ENCODE measurements at regions of chr9 and their contacts with region 1.

Region 1: DNA sequence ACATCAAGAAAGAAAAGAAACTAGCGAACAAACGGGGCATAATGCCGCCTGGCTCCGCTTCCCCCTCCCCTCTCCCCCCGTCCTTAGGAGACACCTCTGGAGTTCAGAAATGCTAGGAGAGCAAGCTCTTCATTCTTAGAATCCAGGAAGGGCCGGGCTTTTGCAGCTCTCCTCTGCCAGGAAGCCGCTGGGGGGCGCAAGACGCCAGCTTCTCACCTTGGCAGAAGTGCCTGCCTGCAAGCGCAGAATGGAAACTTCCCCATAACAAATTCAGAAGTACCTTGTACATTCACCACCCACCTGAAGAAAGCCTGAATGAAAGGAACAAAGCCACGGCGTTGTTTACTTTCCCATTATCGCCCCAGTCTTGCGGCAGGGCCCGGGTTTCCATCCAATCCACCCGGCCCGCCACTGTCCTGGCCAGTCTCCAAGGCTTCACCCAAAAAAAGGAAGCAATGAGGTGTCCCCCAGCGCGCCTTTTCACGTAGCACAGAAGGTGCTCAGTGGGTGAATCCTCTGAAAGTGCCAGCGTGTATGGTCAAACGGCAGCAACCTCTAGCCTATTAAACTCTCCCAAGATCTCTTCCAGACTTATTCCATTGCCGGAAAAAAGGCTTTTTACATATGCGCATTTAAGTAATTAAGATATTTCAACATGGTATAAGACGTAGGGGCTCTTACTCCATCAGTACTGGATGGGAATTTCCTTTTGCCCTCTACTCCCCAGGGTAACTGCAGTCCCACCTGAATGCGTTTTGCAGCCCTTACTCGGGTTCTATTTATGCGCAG is 1.6 kb upstream of the GADD45G start:
- DNase-seq: peak; percentile 88
- H3K4me3 ChIP-seq: peak overlapping the region in 6 of 7 experiments; percentile 43 to 73 (median 64)
- H3K27ac ChIP-seq: no peak overlapping the region
- H3K4me1 ChIP-seq: peaks cover 12 to 46% (median 41%) of the 10 kb centered on the region in 4 experiments
- H3K27me3 ChIP-seq: peaks cover 0 to 14% (median 0%) of the 10 kb centered on the region in 5 experiments

Region 2: GRCh38 chr9:89522261-89522958 is 80.8 kb before region 1 on chr9:
- CTCF ChIA-PET with region 1: no interaction called
- POLR2A ChIA-PET with region 1: no interaction called
- DNase-seq: peak; percentile 85 to 97 (median 94)
- H3K4me3 ChIP-seq: peak overlapping the region in 2 of 7 experiments; percentile 19 to 53
- H3K27ac ChIP-seq: peak overlapping the region in 1 of 2 experiments; percentile 59
- H3K4me1 ChIP-seq: peaks cover 31 to 91% (median 69%) of the 10 kb centered on the region in 4 experiments
- H3K27me3 ChIP-seq: no peaks in the 10 kb centered on the region

Region 3: GRCh38 chr9:89588006-89588879 is 14.9 kb before region 1 on chr9:
- CTCF ChIA-PET with region 1: interaction called, 40 read pairs
- POLR2A ChIA-PET with region 1: no interaction called
- DNase-seq: no peak
- H3K4me3 ChIP-seq: no peak overlapping the region
- H3K27ac ChIP-seq: no peak overlapping the region
- H3K4me1 ChIP-seq: no peaks in the 10 kb centered on the region
- H3K27me3 ChIP-seq: no peaks in the 10 kb centered on the region

Region 4: DNA sequence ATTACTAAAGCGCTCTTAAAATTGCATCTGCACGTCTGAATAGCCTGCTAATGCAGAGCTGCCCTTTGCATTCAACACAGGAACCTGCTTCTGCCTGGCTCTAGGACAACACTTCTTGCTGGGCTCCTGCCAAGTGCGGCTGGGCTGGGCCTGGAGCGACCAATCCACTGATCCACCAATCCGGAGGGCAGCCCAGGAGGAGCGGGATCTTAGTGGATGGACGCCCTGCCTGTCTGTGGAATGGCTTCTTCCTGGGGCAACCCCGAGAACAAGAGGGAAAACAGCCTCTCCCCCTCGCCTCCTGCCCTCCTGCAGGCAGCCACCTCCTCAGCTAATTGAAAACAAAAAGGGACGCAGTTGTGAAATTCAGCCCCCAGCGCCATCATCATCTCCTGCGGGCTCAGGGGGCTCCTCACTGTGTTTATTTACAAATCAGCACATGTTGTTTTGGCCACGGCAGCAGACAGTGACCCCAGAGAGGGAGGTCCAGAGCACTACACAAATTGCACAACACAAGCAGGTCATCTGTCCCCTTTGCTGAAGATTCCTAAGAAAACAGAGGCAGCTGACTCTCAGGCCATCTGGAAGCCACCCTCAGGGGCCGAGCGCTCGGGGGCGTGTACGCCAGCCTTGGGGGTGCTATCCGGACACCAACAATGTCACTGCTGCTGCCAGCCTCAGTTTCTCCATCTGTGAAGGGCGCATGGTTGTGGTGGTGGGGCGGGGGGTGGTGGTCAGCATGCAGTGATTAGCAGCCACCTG is 59.0 kb after region 1 on chr9:
- CTCF ChIA-PET with region 1: no interaction called
- POLR2A ChIA-PET with region 1: no interaction called
- DNase-seq: peak; percentile 89 to 94 (median 92)
- H3K4me3 ChIP-seq: peak overlapping the region in 4 of 7 experiments; percentile 3 to 59 (median 50)
- H3K27ac ChIP-seq: no peak overlapping the region
- H3K4me1 ChIP-seq: peaks cover 13 to 30% (median 19%) of the 10 kb centered on the region in 4 experiments
- H3K27me3 ChIP-seq: peaks cover 0 to 2% (median 0%) of the 10 kb centered on the region in 5 experiments

Region 5: DNA sequence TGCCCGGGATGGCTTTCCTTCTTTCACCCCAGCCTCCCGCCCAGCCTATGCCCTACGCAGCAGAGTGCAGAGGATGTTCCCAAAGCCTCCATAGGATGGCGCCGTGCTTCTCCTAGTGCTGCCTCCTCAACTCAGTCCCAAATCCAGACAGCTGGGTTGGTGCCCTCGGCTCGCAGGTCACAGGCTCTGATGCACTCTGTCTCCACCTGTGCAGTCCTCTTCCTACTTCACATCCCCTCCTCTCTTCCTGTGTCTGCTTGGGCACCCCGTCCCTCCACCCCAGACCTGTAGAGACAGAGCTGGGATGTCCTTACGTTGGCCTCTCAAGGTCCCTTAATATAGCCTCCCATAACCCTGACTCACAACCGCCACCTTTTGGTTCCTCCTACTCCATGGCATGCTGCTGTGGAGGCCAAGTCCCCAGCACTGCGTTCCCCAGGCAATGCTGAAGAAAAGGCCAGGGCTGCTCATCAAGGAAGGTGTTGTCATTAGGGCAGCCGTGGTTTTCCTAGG is 316.1 kb after region 1 on chr9:
- CTCF ChIA-PET with region 1: interaction called, 22 read pairs
- POLR2A ChIA-PET with region 1: no interaction called
- DNase-seq: peak; percentile 68 to 83 (median 80)
- H3K4me3 ChIP-seq: no peak overlapping the region
- H3K27ac ChIP-seq: no peak overlapping the region
- H3K4me1 ChIP-seq: peaks cover 0 to 5% (median 0%) of the 10 kb centered on the region in 4 experiments
- H3K27me3 ChIP-seq: peaks cover 0 to 3% (median 0%) of the 10 kb centered on the region in 5 experiments

Region 6: DNA sequence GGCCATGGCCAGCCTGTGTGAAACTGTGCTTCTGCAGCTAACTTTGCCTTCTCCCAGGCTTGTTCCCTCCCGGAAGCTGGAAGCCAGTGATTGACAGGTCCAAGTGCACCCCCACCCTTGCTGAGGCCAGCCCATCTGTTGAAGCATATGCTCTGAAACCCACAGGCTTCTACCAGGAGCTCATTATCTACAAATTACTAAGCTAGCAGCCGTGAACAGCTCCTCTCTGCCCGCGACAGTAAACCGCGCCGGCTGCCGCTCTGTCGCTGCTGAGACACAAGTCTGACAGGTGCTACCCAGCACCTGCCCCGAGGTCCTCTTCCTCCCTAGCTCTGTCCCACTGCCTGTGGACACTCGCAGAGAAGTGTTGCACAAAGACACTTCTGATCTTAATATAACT is 492.5 kb after region 1 on chr9:
- CTCF ChIA-PET with region 1: interaction called, 323 read pairs
- POLR2A ChIA-PET with region 1: interaction called, 3 read pairs
- DNase-seq: peak in 2 of 3 donors; percentile 50 to 67
- H3K4me3 ChIP-seq: no peak overlapping the region
- H3K27ac ChIP-seq: no peak overlapping the region
- H3K4me1 ChIP-seq: peaks cover 0 to 18% (median 4%) of the 10 kb centered on the region in 4 experiments
- H3K27me3 ChIP-seq: peaks cover 0 to 12% (median 0%) of the 10 kb centered on the region in 5 experiments